Activated CD8-positive, alpha-beta T cell treated with anti-CD3 and anti-CD28 coated beads for 36 hours (primary cell): ENCODE measurements at regions of chr1 and their contacts with region 1.

Region 1: DNA sequence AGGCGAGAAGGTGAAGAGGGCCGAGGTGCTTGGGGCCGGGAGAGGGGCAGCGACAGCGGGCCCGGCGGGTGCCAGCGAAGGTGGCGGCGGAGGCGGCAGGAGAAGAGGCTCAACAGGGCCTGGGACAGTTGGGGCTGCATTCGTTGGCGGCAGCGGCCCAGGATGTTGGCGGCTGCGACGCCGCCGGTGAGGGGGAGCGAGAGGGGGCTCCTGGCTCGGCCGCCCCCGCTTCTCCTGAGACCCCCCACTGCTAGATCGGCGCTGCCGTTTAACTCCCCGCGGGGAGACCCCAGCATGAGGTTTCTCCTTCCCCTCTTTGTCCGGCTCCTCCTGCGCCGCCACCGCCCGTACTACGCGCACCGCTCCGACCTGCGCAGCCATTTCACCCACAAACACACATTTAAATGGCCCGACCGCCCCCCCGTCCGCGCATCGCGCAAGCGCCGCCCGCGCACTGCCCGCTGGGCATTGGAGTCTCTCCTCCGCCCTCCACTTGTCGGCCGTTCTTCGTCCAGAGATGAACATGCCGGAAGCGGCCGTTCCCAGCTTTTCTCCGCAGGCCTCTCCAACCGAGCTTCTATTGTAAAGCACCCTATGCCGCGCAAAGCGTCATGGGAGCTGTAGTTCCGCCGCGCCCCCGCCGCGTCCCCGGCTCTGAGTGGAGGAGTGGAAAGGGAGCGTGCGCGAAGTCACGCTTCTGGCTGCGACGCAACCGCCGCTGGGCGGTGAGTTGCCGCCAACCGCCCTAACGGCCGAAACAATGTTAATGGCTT is at the start of gene RSBN1:
- DNase-seq: peak; percentile 99
- ATAC-seq: peak; percentile 94
- H3K4me3 Mint-ChIP-seq: peak within 1 kb of the TSS; percentile 96
- H3K27ac Mint-ChIP-seq: peak within 1 kb of the TSS; percentile 97
- H3K4me1 Mint-ChIP-seq: peaks cover 36% of the 10 kb centered on the region
- H3K27me3 Mint-ChIP-seq: no peaks in the 10 kb centered on the region
- CTCF ChIP-seq: no peak
- total RNA-seq, gene RSBN1: 25.6 to 28.3 TPM

Region 2: GRCh38 chr1:113759333-113760101 is 52.6 kb before region 1 on chr1 and contains the start of gene PHTF1:
- CTCF ChIA-PET with region 1: interaction called, 9 read pairs
- POLR2A ChIA-PET with region 1: interaction called, 12 read pairs
- intact Hi-C with region 1: loop called (anchors 2 kb)
- DNase-seq: peak; percentile 68
- ATAC-seq: peak; percentile 88
- H3K4me3 Mint-ChIP-seq: peak within 1 kb of the TSS; percentile 93
- H3K27ac Mint-ChIP-seq: peak within 1 kb of the TSS; percentile 99
- H3K4me1 Mint-ChIP-seq: peaks cover 24% of the 10 kb centered on the region
- H3K27me3 Mint-ChIP-seq: no peaks in the 10 kb centered on the region
- CTCF ChIP-seq: no peak
- total RNA-seq, gene PHTF1: 13.1 to 14.4 TPM

Region 3: DNA sequence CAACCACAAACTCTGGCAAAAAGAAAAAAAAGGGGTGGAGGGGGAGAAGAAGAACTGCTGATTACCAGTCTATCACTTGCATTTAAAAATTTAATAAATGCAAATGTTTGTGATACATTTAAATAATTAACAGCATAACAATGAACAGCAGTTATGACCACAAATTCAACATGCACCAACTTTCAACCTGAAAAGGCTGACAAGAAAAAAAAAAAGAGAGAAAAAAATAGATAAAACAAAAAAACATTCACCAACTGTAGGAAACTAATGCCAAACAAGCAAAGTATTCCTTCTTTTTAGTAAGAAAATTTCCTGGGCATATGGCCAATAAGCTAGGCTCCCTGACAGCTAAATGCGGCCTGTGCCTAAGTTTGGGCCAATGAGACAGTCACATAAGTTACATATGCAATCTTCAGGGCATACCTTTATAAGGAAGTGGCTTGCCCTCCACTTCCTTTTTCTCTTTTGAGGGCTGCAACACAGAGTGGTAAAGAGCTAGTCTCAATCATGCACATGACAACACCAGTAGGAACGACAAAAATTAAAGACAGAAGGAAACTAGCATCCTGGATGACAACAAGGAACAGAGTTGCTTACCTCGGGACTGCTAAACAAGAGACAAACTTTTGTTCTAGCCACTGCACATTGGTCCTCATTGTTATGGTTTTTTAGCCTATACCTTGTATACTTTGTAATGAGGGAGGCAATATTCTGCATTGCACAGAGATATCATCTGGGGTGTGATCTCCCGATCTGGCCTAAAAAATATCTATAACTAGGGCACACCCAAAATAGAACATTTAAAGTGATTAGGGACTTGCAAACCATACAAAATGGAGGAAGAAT is 28.6 kb before region 1 on chr1:
- CTCF ChIA-PET with region 1: no interaction called
- POLR2A ChIA-PET with region 1: interaction called, 10 read pairs
- intact Hi-C with region 1: loop called (anchors 2 kb)
- DNase-seq: peak; percentile 63
- ATAC-seq: peak; percentile 88
- H3K4me3 Mint-ChIP-seq: peak overlapping the region; percentile 62
- H3K27ac Mint-ChIP-seq: no peak overlapping the region
- H3K4me1 Mint-ChIP-seq: peaks cover 40% of the 10 kb centered on the region
- H3K27me3 Mint-ChIP-seq: no peaks in the 10 kb centered on the region
- CTCF ChIP-seq: no peak

Region 4: DNA sequence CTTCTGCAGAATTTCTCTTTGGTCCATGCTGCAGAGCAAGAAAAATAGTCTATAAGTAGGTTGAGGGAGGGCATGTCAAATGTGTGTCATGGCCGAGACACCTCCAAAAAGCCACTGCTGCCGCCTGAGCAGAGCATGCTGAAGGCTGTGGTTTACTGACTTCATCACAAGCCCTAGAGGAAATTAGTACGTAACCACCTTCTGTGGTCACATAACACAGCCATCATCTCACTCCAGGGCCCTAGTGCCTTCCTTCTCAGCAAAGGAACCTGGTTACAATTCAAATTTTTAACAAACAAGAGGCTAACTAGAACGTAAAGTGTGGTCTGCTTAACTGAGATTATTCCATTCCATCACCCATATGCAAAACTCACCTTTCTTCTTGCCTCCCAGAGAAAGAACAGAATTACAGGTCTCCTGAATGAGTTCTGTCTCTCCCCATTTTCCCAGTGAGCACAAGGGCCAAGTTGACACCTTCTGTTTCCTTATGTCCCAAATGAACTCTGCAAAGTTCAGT is 59.6 kb after region 1 on chr1 and contains the start of gene PTPN22:
- CTCF ChIA-PET with region 1: no interaction called
- POLR2A ChIA-PET with region 1: interaction called, 10 read pairs
- intact Hi-C with region 1: no loop called
- DNase-seq: peak; percentile 91
- ATAC-seq: peak; percentile 79
- H3K4me3 Mint-ChIP-seq: peak within 1 kb of the TSS; percentile 91
- H3K27ac Mint-ChIP-seq: peak within 1 kb of the TSS; percentile 98
- H3K4me1 Mint-ChIP-seq: peaks cover 61% of the 10 kb centered on the region
- H3K27me3 Mint-ChIP-seq: no peaks in the 10 kb centered on the region
- CTCF ChIP-seq: no peak
- total RNA-seq, gene PTPN22: 54.0 to 56.0 TPM

Region 5: GRCh38 chr1:113958701-113959100 is 146.6 kb after region 1 on chr1:
- CTCF ChIA-PET with region 1: no interaction called
- POLR2A ChIA-PET with region 1: no interaction called
- intact Hi-C with region 1: no loop called
- DNase-seq: no peak
- ATAC-seq: no peak
- H3K4me3 Mint-ChIP-seq: no peak overlapping the region
- H3K27ac Mint-ChIP-seq: no peak overlapping the region
- H3K4me1 Mint-ChIP-seq: peaks cover 50% of the 10 kb centered on the region
- H3K27me3 Mint-ChIP-seq: no peaks in the 10 kb centered on the region
- CTCF ChIP-seq: no peak